CD8-positive, alpha-beta T cell (primary cell): ENCODE measurements at regions of chr6 and their contacts with region 1.

Region 1: DNA sequence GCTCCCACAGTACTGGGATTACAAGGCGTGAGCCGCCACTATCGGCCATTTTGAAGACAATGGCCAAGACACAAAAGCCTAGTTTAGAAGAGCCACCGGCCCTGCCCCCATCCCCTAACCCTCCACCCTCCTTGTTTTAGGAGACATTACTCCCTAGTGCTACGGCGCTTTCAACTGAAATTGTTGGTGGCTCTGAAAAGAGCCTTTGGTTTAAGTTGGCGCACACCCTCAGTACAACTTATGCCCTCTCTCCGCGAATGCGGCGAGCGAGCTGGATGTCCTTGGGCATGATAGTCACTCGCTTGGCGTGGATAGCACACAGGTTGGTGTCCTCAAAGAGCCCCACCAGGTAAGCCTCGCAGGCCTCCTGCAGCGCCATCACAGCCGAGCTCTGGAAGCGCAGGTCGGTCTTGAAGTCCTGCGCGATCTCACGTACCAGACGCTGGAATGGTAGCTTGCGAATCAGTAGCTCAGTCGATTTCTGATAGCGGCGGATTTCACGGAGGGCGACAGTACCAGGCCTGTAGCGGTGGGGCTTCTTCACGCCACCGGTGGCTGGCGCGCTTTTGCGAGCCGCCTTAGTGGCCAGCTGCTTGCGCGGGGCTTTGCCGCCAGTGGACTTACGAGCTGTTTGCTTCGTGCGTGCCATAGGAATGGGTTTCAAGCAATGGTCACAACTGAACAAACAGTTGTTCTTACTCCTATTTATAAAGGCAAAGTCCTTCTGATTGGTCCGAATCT is 114.9 kb upstream of the BTN3A2 start:
- DNase-seq: peak; percentile 59 to 91 (median 79)
- ATAC-seq: peak; percentile 77
- H3K4me3 ChIP-seq: peak overlapping the region; percentile 74 to 80
- H3K4me3 Mint-ChIP-seq: peak overlapping the region; percentile 90
- H3K27ac ChIP-seq: peak overlapping the region; percentile 73 to 83
- H3K27ac Mint-ChIP-seq: peak overlapping the region; percentile 96
- H3K4me1 ChIP-seq: peaks cover 15% of the 10 kb centered on the region
- H3K4me1 Mint-ChIP-seq: peaks cover 40% of the 10 kb centered on the region
- H3K27me3 ChIP-seq: no peaks in the 10 kb centered on the region
- H3K27me3 Mint-ChIP-seq: no peaks in the 10 kb centered on the region
- CTCF ChIP-seq: peak; percentile 57

Region 2: GRCh38 chr6:26065952-26066380 is 184.2 kb before region 1 on chr6:
- CTCF ChIA-PET with region 1: no interaction called
- POLR2A ChIA-PET with region 1: no interaction called
- intact Hi-C with region 1: no loop called
- DNase-seq: peak in 7 of 9 experiments; percentile 32 to 86 (median 58)
- ATAC-seq: peak; percentile 95
- H3K4me3 ChIP-seq: no peak overlapping the region
- H3K4me3 Mint-ChIP-seq: no peak overlapping the region
- H3K27ac ChIP-seq: no peak overlapping the region
- H3K27ac Mint-ChIP-seq: no peak overlapping the region
- H3K4me1 ChIP-seq: peaks cover 6% of the 10 kb centered on the region
- H3K4me1 Mint-ChIP-seq: peaks cover 5% of the 10 kb centered on the region
- H3K27me3 ChIP-seq: no peaks in the 10 kb centered on the region
- H3K27me3 Mint-ChIP-seq: peaks cover 1% of the 10 kb centered on the region
- CTCF ChIP-seq: peak; percentile 95

Region 3: DNA sequence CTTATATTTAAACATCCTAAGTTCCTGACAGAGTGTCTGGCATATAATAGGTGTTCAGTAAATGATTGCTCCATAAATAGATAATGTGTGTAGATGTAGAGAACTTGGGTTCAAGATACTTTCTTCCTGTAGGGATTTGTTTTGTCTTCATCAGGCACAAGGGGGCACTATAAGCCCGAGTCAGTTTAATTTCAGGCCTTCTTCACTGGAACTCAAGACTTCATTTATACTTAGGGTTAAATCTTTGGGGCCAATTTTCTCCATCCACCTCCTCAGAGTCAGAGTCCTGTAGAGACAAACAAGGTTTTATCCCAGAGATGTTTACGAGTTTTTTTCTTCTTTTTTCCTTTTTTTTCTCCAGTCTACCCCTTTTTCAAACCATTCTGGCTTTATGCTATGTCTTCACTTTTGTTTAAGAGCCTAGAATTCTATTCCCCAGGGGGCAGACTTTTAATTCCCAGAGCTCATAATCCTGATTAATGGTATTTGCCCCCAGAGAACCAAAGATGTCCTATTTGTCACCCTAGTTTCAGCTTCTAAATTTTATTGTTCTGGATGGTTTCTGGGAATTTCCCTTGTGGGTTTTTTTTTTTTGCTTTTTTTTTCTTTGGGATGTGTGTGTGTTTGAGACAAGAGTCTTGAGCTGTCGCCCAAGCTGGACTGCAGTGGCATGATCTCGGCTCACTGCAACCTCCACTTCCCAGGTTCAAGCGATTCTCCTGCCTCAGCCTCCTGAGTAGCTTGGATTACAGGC is 74.5 kb before region 1 on chr6:
- CTCF ChIA-PET with region 1: interaction called, 3 read pairs
- POLR2A ChIA-PET with region 1: interaction called, 26 read pairs
- intact Hi-C with region 1: loop called in 1 of 2 experiments (anchors 2 kb)
- DNase-seq: peak in 7 of 9 experiments; percentile 33 to 87 (median 53)
- ATAC-seq: no peak
- H3K4me3 ChIP-seq: no peak overlapping the region
- H3K4me3 Mint-ChIP-seq: peak overlapping the region; percentile 3
- H3K27ac ChIP-seq: no peak overlapping the region
- H3K27ac Mint-ChIP-seq: peak overlapping the region; percentile 63
- H3K4me1 ChIP-seq: peaks cover 26% of the 10 kb centered on the region
- H3K4me1 Mint-ChIP-seq: peaks cover 39% of the 10 kb centered on the region
- H3K27me3 ChIP-seq: no peaks in the 10 kb centered on the region
- H3K27me3 Mint-ChIP-seq: no peaks in the 10 kb centered on the region
- CTCF ChIP-seq: peak; percentile 93

Region 4: DNA sequence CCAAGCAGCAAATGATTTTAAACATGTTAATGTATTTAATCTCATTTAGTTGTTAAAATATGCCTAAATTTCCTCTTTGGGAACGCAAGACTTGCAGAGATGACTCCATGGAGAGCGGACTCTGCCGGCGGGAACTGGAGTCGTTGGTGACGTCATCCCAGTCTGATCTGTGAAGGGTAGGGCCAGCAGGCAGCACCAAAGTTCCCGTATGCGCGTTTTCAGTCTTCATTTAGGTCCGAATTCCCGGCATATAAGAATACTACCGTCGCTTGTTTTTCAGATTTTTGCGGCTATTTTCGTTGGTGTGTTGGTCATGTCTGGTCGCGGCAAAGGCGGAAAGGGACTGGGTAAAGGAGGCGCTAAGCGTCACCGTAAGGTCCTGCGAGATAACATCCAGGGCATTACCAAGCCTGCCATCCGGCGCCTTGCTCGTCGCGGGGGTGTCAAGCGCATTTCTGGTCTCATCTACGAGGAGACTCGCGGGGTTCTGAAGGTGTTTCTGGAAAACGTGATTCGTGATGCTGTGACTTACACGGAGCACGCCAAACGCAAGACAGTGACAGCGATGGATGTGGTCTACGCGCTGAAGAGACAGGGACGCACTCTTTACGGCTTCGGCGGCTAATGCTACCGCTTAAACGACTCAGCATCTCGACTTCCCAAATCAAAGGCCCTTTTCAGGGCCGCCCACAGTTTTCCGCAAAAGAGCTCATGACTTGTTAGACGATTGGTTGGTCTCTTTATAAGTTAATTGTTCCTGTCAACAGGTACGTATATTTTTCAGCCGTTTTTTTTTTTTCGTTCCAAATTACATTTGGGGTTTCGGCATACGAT is 45.6 kb before region 1 on chr6:
- CTCF ChIA-PET with region 1: interaction called, 24 read pairs
- POLR2A ChIA-PET with region 1: interaction called, 51 read pairs
- intact Hi-C with region 1: loop called in 1 of 2 experiments (anchors 1 kb)
- DNase-seq: peak; percentile 75 to 98 (median 84)
- ATAC-seq: peak; percentile 74
- H3K4me3 ChIP-seq: peak overlapping the region; percentile 54 to 70
- H3K4me3 Mint-ChIP-seq: no peak overlapping the region
- H3K27ac ChIP-seq: peak overlapping the region; percentile 91
- H3K27ac Mint-ChIP-seq: no peak overlapping the region
- H3K4me1 ChIP-seq: peaks cover 31% of the 10 kb centered on the region
- H3K4me1 Mint-ChIP-seq: peaks cover 23% of the 10 kb centered on the region
- H3K27me3 ChIP-seq: no peaks in the 10 kb centered on the region
- H3K27me3 Mint-ChIP-seq: no peaks in the 10 kb centered on the region
- CTCF ChIP-seq: no peak

Region 5: DNA sequence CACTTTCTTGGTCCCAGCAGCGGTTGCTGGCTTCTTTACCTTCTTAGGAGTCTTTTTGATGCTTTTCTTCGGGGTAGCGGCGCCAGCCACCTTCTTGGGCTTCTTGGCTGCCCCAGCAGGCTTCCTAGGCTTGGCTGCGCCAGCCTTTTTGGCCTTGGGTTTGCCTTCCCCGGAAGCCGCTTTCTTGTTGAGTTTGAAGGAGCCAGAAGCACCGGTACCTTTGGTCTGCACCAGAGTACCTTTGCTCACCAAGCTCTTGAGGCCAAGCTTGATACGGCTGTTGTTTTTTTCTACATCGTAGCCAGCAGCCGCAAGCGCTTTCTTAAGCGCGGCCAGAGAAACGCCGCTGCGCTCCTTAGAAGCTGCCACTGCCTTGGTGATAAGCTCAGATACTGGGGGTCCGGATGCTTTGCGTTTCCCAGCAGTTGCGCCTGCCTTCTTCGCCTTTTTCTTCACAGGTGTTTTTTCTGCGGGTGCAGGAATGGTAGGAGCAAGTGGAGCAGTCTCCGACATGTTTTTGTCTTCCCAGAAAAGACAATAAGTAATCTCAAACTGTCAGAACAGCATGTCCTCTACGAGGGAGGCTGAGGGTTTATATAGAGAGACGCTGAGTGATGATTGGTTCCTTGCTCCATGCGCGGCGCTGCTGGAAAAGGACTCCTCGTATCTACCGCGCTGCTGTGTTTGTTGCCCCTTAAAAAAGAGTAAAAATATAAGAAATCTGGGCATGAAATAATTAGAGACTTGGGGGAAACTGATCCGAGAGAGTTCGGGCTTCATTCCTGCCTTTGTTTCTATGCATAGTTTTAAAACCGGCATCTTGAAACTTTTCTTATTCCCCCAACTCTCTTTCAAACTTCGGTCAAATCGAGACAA is 15.5 kb before region 1 on chr6:
- CTCF ChIA-PET with region 1: interaction called, 22 read pairs
- POLR2A ChIA-PET with region 1: interaction called, 5 read pairs
- intact Hi-C with region 1: loop called (anchors 1 to 2 kb)
- DNase-seq: peak; percentile 55 to 88 (median 66)
- ATAC-seq: peak; percentile 63
- H3K4me3 ChIP-seq: peak overlapping the region; percentile 66 to 76
- H3K4me3 Mint-ChIP-seq: peak overlapping the region; percentile 85
- H3K27ac ChIP-seq: peak overlapping the region; percentile 84 to 92
- H3K27ac Mint-ChIP-seq: peak overlapping the region; percentile 93
- H3K4me1 ChIP-seq: peaks cover 14% of the 10 kb centered on the region
- H3K4me1 Mint-ChIP-seq: peaks cover 31% of the 10 kb centered on the region
- H3K27me3 ChIP-seq: no peaks in the 10 kb centered on the region
- H3K27me3 Mint-ChIP-seq: no peaks in the 10 kb centered on the region
- CTCF ChIP-seq: no peak

Region 6: DNA sequence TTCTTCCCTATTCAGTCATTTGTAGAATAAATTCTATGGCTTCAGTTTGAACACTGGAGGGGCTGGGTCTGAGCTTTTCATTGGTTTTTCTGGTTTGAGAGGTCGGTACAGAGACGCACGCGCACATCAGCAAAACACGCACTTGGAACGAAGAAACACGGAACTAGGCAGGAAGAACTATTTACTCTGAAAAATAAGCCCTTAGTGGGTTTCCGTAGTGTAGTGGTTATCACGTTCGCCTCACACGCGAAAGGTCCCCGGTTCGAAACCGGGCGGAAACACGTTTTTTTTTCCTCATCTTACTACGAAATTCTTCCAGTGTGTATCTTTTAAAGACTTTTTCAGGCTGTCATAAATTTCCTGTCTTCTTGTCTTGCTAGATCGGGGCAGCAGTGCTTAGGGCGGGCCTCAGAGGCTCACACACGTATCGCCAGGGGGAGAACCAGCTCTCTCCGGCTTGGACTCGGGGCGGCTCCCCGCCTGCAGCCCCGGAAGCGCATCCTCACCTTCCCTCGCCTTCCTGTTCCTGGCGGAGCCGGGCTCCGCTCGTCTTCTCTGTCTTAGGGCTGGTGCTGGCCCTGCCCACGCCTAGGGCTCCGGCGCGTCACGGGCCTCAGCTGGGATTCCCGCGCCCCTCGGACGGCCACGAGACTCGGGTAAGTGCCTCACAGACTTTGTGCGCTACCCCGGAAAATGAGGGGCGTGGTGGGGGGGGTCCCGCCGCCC is 287.9 kb after region 1 on chr6 and contains the start of gene HMGN4:
- CTCF ChIA-PET with region 1: interaction called, 3 read pairs
- POLR2A ChIA-PET with region 1: interaction called, 13 read pairs
- intact Hi-C with region 1: no loop called
- DNase-seq: peak; percentile 65 to 96 (median 79)
- ATAC-seq: peak; percentile 69
- H3K4me3 ChIP-seq: peak within 1 kb of the TSS; percentile 66 to 99
- H3K4me3 Mint-ChIP-seq: peak within 1 kb of the TSS; percentile 89
- H3K27ac ChIP-seq: peak within 1 kb of the TSS; percentile 88 to 93
- H3K27ac Mint-ChIP-seq: peak within 1 kb of the TSS; percentile 92
- H3K4me1 ChIP-seq: peaks cover 32% of the 10 kb centered on the region
- H3K4me1 Mint-ChIP-seq: peaks cover 58% of the 10 kb centered on the region
- H3K27me3 ChIP-seq: no peaks in the 10 kb centered on the region
- H3K27me3 Mint-ChIP-seq: no peaks in the 10 kb centered on the region
- CTCF ChIP-seq: no peak
- total RNA-seq, gene HMGN4: 24.8 to 33.7 TPM